ENCODE measurements at regions of chr14 and their contacts with region 1.

Region 1: GRCh38 chr14:77301103-77301502 is 19.6 kb downstream of the POMT2 start:
- DNase-seq: no peak
- H3K4me3 ChIP-seq: no peak overlapping the region
- CTCF ChIP-seq: peak; percentile 90

Region 2: DNA sequence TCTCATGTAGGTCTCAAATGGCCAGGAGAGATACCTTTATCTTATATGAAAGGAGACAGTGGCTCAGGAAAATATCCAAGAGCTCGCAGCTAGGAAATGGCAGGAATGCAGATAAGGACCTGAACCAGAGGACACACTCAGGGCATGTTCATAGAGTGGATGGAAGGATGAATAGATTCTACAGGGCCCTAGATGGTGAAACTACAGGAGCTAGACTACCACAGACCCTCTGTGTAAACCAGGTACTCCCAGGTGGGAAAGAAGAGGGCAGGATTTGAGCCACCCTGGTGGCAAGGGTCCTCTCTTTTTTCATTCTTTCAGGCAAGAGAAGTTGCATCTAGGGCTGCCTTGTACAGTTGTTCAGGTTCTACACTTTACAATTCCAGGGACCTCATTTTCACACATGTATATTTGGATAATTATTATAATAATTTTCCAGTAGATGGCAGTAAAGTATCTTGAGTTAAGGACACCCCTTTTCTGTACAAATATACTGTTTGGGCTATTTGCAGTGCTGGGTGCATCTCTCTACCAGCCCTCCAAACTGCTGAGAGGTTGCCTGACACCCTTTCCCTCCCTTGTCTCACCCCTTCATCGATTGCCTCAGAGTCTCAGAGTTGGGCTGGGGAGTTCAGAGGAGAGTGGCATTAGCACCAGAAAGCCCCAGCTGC is 149.1 kb before region 1 on chr14:
- CTCF ChIA-PET with region 1: interaction called, 20 read pairs
- POLR2A ChIA-PET with region 1: no interaction called
- DNase-seq: no peak
- H3K4me3 ChIP-seq: no peak overlapping the region
- CTCF ChIP-seq: no peak

Region 3: DNA sequence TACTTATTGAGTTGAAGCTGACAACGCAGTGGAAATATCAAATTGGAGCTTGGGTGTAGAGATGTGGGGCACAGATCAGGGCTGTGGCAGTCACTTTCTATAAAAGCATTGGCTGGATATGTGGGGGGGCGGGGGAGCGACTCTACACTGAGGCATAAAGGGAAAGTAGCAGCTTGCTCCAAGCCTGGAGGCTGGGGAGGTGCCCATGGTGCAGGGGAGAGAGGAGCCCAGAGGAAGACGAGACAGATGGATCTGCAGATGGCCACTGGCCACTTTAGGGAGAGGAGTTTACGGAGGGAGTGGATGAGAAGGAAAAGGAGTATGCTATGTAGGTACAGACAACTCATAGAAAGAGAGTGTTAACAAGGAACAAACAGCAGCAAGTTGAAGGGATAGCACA is 16.6 kb before region 1 on chr14:
- CTCF ChIA-PET with region 1: interaction called, 64 read pairs
- POLR2A ChIA-PET with region 1: no interaction called
- DNase-seq: no peak
- H3K4me3 ChIP-seq: no peak overlapping the region
- CTCF ChIP-seq: no peak

Region 4: DNA sequence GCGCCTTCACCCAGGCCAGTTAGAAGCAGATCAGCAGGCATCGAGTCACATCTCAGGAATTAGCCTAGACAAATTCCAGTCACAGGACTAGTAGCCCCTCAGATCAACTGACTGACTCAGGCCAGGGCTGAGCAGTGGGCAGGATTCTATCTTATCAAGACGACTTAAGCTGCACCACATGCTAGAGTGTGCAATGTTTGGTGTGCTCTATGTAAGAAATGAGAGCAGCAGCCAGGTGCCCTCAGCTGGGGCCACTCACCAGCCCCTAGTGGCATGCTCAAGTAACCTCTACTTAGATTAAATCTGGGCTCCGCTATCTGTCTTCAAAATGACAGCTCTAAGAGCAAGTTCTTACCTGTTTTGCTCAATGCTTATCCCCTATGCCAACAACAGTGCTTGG is 10.4 kb before region 1 on chr14:
- CTCF ChIA-PET with region 1: interaction called, 64 read pairs
- POLR2A ChIA-PET with region 1: no interaction called
- DNase-seq: no peak
- H3K4me3 ChIP-seq: no peak overlapping the region
- CTCF ChIP-seq: no peak

Region 5: GRCh38 chr14:77320238-77320935 is 19.3 kb after region 1 on chr14 and contains the start of gene POMT2:
- CTCF ChIA-PET with region 1: interaction called, 416 read pairs
- POLR2A ChIA-PET with region 1: interaction called, 12 read pairs
- DNase-seq: no peak
- H3K4me3 ChIP-seq: peak within 1 kb of the TSS; percentile 87
- CTCF ChIP-seq: peak; percentile 58

Region 6: GRCh38 chr14:77369285-77369684 is 68.2 kb after region 1 on chr14:
- CTCF ChIA-PET with region 1: no interaction called
- POLR2A ChIA-PET with region 1: no interaction called
- DNase-seq: no peak
- H3K4me3 ChIP-seq: no peak overlapping the region
- CTCF ChIP-seq: no peak

Measured in AG04449 (cell line).